Aorta (tissue), 5 donors: ENCODE measurements at regions of chr1 and their contacts with region 1.

Region 1: DNA sequence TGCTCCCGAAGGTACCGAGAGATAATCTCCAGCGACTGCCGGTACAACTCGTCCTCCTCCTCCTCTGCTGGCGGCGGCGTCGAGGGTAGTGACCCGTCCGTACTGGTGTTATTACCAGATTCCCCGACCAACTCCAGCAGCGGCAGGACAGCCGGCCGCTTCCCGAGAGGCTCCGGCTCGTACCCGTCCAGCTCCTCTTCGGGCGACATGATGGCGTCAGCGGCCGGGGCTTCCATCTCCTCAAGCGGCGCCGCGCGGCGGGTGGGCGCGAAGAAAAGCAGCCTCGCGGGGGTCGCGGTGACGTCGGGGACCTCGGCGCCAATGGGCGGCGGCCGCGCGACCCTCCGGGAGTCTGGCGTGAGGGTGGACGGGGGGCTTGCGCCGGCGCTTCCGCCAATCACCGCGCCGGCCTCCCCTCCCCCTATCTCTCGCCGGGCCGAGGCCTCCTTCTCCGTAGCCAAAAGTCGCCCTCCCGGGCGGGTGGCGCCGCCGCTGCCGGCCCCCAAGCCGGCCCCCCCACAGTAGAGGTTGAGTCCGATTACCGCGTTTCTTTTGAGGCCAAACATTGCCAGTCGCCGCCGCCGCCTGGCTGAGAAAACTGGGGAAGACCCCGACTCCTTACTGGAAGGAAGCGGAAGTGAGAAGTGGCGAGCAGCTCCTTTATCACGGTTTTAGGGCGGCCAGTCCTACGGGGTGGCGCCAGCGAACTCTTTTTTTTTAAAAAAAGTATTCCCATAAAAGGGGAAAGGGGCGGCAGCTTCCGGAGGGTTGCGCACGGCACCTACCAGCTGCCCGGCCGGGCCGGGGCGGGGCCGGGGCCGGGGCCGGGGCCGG is at the start of gene MCL1:
- DNase-seq: peak; percentile 95 to 96
- ATAC-seq: peak; percentile 93
- H3K4me3 ChIP-seq: peak within 1 kb of the TSS; percentile 94 to 95
- H3K27ac ChIP-seq: peak within 1 kb of the TSS; percentile 90 to 99
- H3K4me1 ChIP-seq: no peaks in the 10 kb centered on the region
- H3K27me3 ChIP-seq: no peaks in the 10 kb centered on the region
- total RNA-seq, gene MCL1: 247 to 533 TPM

Region 2: DNA sequence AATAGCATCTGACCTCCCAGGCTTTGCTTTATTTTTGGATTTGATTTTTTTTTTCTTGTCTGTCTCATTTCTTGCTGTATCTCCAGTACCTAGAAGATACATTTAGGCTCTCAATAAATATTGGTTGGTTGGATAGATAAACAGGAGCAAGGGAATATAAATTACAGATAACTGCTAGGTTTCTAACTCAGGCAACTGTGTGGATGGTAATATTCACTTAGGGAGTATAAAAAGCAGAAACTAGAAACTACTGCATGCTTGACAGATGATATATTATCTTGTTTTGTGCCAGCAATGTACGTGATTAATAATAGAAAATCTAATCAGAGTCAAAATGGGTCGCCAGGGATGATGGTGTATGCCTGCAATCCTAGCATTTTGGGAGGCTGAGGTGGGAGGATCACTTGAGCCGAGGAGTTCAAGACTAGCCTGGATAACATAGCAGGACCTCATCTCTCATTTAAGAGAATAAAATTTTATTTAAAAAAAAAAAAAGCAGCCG is 123.0 kb before region 1 on chr1:
- intact Hi-C with region 1: no loop called
- DNase-seq: no peak
- ATAC-seq: no peak
- H3K4me3 ChIP-seq: no peak overlapping the region
- H3K27ac ChIP-seq: no peak overlapping the region
- H3K4me1 ChIP-seq: no peaks in the 10 kb centered on the region
- H3K27me3 ChIP-seq: no peaks in the 10 kb centered on the region

Region 3: DNA sequence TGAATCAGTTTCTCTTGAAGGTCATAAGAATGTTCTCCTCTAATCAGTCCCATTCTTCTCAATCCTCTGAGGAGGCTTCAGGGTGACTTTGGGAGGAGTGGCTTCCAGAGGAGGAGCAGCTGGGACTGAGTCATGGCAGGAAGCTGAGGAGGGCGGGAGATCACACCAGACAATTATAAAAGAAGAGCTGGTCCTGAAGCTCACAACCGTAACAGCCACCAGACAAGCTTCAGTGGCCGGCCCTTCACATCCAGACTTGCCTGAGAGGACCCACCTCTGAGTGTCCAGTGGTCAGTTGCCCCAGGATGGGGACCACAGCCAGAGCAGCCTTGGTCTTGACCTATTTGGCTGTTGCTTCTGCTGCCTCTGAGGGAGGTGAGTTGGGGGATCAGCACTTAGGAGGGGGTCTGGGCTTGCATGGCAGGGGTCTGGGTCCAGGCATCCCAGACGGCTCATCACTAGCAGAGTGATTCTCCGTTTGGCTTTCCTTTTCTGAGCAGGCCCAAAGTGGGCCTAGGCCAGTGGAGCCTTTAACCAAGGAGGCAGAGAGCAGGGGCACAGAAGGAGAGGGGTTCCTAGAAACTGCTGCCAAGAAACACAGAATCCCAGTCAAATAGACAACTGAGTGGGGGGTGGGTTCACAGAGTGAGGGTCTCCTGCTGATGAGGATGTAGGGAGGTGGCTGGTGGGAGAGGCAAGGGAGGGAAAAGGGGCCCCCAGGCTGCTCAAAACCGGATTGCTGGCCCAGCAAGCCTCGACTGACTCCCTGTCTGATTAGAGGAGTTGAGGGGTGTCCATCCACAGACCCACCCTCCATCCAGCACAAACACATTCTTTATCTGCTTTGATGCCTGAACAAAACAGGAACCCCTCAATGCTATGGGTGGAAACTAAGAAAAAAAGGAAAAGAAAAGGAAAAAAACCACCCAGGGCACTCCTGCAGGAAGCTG is 71.0 kb before region 1 on chr1 and contains the start of gene ECM1:
- intact Hi-C with region 1: no loop called
- DNase-seq: peak; percentile 70 to 80
- ATAC-seq: peak; percentile 70
- H3K4me3 ChIP-seq: no peak within 1 kb of the TSS
- H3K27ac ChIP-seq: no peak within 1 kb of the TSS
- H3K4me1 ChIP-seq: no peaks in the 10 kb centered on the region
- H3K27me3 ChIP-seq: no peaks in the 10 kb centered on the region
- total RNA-seq, gene ECM1: 26.3 to 57.6 TPM

Region 4: DNA sequence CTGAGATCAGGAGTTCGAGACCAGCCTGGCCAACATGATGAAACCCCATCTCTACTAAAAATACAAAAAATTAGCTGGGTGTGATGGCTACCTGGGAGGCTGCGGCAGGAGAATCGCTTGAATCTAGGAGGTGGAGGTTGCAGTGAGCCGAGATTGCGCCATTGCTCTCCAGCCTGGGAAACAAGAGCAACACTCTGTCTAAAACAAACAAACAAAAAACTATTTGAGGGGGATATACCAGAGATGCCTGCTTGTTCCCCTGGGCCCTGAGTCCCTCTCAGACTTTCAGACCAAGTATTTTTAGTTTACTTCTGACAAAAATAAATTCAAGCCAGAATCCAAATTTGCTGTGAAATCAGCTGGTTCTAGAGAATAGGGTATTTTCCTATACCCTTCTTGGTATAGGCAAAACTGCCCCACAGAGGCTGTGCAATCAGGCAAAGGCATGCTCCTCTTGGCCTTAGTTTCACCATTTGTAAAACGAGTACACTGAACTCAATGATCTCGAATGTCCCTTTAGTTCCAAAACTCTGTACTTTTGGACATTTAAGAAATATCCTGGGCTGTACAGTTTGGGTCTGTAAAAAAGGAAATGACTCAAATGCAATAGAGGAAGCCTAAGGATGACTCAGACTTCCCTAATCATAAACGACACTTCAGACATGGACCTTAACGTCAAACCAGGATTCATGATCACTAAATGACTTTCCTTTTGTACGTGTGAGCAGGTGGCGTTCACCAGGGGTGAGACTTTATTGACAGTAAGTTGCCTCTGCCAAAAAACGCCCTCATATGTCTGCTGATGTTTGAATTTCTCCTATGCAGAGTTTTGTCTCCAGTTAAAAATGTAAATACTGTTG is 34.1 kb after region 1 on chr1:
- intact Hi-C with region 1: loop called (anchors 2 kb)
- DNase-seq: no peak
- ATAC-seq: peak; percentile 72
- H3K4me3 ChIP-seq: no peak overlapping the region
- H3K27ac ChIP-seq: peak overlapping the region; percentile 43 to 75
- H3K4me1 ChIP-seq: peaks cover 2 to 9% of the 10 kb centered on the region in 2 donors
- H3K27me3 ChIP-seq: no peaks in the 10 kb centered on the region

Region 5: DNA sequence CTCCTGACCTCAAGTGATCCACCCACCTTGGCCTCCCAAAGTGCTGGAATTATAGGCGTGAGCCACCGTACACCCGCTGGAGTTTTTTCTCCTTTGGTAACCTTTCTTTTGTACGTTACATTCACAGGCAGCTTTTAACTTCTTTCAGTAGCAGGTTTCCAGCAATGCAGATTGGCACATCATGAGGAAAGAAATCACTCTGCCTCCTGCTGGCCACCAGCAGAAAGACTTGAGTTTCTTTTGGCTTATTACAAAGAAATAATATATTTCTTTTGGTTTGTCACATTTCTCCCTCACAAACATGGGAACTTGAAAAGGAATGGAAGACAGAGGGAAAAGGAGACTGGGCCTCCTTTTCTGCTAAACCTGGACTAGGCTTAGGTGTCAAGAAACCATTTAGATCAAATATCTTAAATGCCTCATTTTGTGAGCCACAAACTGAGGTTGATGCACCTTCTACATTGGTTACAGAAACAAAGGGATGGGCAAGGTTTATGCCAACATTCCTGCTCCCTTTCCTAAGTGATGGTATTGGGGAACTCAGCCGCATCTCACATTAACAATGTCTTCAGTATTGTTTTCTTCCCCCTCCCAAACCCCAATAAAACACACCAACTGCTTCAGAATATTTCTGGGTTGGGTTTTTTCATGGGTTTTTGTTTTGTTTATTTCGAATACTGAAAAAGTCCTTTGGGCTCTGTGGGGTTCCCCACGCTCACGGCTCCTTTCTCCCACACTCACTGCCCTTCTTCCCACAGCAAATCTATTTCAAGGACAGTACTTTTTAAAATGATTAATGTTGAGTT is 42.5 kb after region 1 on chr1:
- intact Hi-C with region 1: loop called in 1 of 2 experiments (anchors 2 kb)
- DNase-seq: peak in 1 of 2 donors; percentile 72
- ATAC-seq: peak; percentile 68
- H3K4me3 ChIP-seq: no peak overlapping the region
- H3K27ac ChIP-seq: peak overlapping the region in 1 of 2 donors; percentile 33
- H3K4me1 ChIP-seq: peaks cover 0 to 13% of the 10 kb centered on the region in 2 donors
- H3K27me3 ChIP-seq: no peaks in the 10 kb centered on the region